ENCODE measurements at regions of chr1 and their contacts with region 1.

Region 1: GRCh38 chr1:17661546-17662157 is 93.5 kb upstream of the ACTL8 start:
- DNase-seq: peak in 4 of 5 donors; percentile 41 to 77 (median 56)
- ATAC-seq: peak in 3 of 4 donors; percentile 18 to 43 (median 39)
- H3K4me3 ChIP-seq: no peak overlapping the region
- H3K27ac ChIP-seq: no peak overlapping the region
- H3K4me1 ChIP-seq: no peaks in the 10 kb centered on the region
- H3K27me3 ChIP-seq: no peaks in the 10 kb centered on the region
- CTCF ChIP-seq: peak; percentile 59 to 81 (median 78)
- POLR2A ChIP-seq: no peak

Region 2: GRCh38 chr1:17348125-17348979 is 313.3 kb before region 1 on chr1:
- intact Hi-C with region 1: no loop called
- DNase-seq: no peak
- ATAC-seq: no peak
- H3K4me3 ChIP-seq: no peak overlapping the region
- H3K27ac ChIP-seq: no peak overlapping the region
- H3K4me1 ChIP-seq: no peaks in the 10 kb centered on the region
- H3K27me3 ChIP-seq: peaks cover 0 to 51% (median 2%) of the 10 kb centered on the region in 9 donors
- CTCF ChIP-seq: no peak
- POLR2A ChIP-seq: no peak

Region 3: DNA sequence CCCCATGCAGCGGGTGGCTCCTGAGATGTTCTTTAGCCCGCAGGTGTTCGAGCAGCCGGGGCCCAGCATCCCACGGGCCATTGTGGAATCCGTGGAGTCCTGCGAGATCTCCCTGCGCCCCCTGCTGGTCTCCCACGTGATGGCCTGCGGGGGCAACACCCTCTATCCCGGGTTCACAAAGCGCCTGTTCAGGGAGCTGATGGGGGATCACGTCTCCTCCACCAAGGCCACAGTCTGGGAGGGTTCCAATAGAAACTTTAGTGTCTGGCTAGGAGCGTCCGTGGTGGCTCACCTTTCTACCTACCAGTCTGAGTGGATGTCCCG is 164.5 kb after region 1 on chr1:
- intact Hi-C with region 1: loop called (anchors 5 to 10 kb)
- DNase-seq: peak; percentile 23 to 74 (median 45)
- ATAC-seq: peak in 3 of 4 donors; percentile 10 to 45 (median 33)
- H3K4me3 ChIP-seq: no peak overlapping the region
- H3K27ac ChIP-seq: no peak overlapping the region
- H3K4me1 ChIP-seq: peaks cover 0 to 9% (median 0%) of the 10 kb centered on the region in 12 donors
- H3K27me3 ChIP-seq: peaks cover 0 to 8% (median 0%) of the 10 kb centered on the region in 9 donors
- CTCF ChIP-seq: peak; percentile 39 to 69 (median 54)
- POLR2A ChIP-seq: no peak

Region 4: DNA sequence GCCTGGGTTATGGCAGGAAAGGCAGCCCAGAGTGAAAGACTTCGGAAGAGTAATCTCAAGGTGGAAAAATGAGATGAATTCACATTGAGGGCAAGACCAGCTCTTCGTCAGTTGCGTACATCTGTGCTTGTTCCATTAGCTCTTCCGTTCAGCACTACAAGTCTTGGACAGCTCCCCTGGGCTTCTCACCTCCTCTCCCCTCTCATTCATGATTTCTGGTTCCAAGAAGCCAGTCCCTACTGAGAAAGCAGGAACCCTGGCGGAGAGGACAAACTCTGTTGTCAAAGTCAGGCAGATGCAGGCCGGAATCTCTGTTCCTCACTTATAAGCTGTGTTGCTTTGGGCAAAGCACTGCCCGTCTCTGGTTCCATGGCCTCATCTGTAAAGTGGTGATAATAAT is 170.0 kb after region 1 on chr1:
- intact Hi-C with region 1: loop called (anchors 5 to 10 kb)
- DNase-seq: peak in 3 of 5 donors; percentile 15 to 48 (median 29)
- ATAC-seq: no peak
- H3K4me3 ChIP-seq: no peak overlapping the region
- H3K27ac ChIP-seq: no peak overlapping the region
- H3K4me1 ChIP-seq: peaks cover 0 to 9% (median 0%) of the 10 kb centered on the region in 12 donors
- H3K27me3 ChIP-seq: peaks cover 0 to 15% (median 0%) of the 10 kb centered on the region in 9 donors
- CTCF ChIP-seq: no peak
- POLR2A ChIP-seq: no peak

Region 5: DNA sequence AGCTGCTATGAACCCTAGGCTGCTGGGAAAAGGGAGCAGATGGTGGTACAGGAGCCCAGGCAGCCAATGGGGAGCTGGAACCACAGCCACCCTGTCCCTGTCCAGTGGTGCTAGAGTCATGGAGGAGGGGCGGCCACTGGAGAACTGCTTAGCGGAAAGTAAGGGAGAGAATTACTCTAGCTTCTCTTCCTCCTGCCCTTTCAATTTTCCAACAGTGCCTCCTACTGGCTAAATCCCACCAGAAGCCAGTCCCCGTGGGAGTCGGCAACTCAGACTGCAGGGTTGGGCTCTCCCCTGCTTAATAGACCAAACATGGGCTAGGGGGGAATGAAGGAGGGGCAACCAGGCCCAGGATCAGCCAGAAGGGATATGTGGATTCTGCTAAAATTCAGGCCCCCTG is 248.0 kb after region 1 on chr1:
- intact Hi-C with region 1: loop called in 7 of 10 experiments (anchors 1 to 10 kb)
- DNase-seq: no peak
- ATAC-seq: peak; percentile 48 to 77 (median 64)
- H3K4me3 ChIP-seq: no peak overlapping the region
- H3K27ac ChIP-seq: no peak overlapping the region
- H3K4me1 ChIP-seq: no peaks in the 10 kb centered on the region
- H3K27me3 ChIP-seq: peaks cover 0 to 18% (median 7%) of the 10 kb centered on the region in 9 donors
- CTCF ChIP-seq: peak in 9 of 12 donors; percentile 14 to 49 (median 37)
- POLR2A ChIP-seq: no peak

Region 6: GRCh38 chr1:18091660-18092446 is 430.2 kb after region 1 on chr1:
- intact Hi-C with region 1: loop called in 1 of 10 experiments (anchors 10 kb)
- DNase-seq: no peak
- ATAC-seq: peak in 2 of 4 donors; percentile 67 to 72
- H3K4me3 ChIP-seq: no peak overlapping the region
- H3K27ac ChIP-seq: no peak overlapping the region
- H3K4me1 ChIP-seq: no peaks in the 10 kb centered on the region
- H3K27me3 ChIP-seq: peaks cover 0 to 78% (median 14%) of the 10 kb centered on the region in 9 donors
- CTCF ChIP-seq: no peak
- POLR2A ChIP-seq: no peak

Region 7: DNA sequence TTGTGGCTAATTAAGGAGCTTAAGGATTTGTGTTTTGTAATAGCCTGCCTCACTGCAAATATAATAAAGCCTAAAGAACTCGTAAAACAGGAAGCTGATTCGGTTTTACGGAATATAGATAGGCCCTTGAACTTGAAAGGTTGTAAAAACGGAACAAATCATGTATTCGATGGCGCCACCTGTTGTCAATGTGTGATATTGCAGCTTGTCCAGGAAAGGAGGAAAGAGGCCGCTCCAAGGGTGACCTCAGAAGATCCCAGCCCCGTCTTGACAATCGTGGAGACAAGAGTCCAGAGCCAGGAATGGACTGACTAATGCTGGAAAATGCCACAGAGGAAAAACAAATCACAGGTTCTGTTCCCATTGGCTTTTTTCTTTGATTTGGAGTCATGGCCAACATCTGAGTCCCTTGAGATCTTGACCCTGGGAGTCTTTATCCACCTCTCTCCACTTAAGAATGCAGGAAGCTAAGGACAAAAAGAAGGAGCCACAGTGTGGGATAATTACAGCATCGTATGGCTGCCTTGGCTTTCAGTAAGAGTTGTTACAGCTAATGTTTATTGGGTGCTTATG is 438.9 kb after region 1 on chr1:
- intact Hi-C with region 1: loop called in 6 of 10 experiments (anchors 5 to 10 kb)
- DNase-seq: peak in 4 of 5 donors; percentile 26 to 57 (median 40)
- ATAC-seq: peak; percentile 34 to 62 (median 52)
- H3K4me3 ChIP-seq: no peak overlapping the region
- H3K27ac ChIP-seq: no peak overlapping the region
- H3K4me1 ChIP-seq: no peaks in the 10 kb centered on the region
- H3K27me3 ChIP-seq: peaks cover 0 to 46% (median 12%) of the 10 kb centered on the region in 9 donors
- CTCF ChIP-seq: peak; percentile 58 to 78 (median 70)
- POLR2A ChIP-seq: no peak

Region 8: DNA sequence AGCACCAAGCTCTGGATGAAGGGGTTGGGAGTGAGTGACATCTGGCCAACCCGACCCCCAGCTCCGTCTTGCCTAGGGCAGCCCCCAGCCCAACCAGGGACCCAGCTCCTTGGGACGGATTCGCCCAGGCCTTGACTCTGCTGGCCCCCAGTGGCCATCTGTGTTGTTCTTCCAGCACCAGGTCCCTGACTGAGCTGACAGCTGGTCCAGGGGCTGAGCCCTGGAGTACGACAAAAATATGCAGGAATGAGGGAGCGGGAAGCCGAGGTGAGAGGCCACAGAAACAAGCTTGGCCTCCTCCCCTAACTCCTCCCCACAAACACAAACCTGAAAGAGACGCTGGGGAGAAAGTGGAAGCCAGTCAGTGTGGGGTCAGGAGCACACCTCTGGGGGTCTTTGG is 914.0 kb after region 1 on chr1:
- intact Hi-C with region 1: loop called in 4 of 10 experiments (anchors 10 kb)
- DNase-seq: peak in 2 of 5 donors; percentile 56 to 78
- ATAC-seq: peak in 1 of 4 donors; percentile 65
- H3K4me3 ChIP-seq: no peak overlapping the region
- H3K27ac ChIP-seq: no peak overlapping the region
- H3K4me1 ChIP-seq: no peaks in the 10 kb centered on the region
- H3K27me3 ChIP-seq: peaks cover 0 to 51% (median 7%) of the 10 kb centered on the region in 9 donors
- CTCF ChIP-seq: peak in 11 of 12 donors; percentile 14 to 83 (median 62)
- POLR2A ChIP-seq: no peak